MCF 10A (cell line): ENCODE measurements at regions of chr4 and their contacts with region 1.

Region 1: DNA sequence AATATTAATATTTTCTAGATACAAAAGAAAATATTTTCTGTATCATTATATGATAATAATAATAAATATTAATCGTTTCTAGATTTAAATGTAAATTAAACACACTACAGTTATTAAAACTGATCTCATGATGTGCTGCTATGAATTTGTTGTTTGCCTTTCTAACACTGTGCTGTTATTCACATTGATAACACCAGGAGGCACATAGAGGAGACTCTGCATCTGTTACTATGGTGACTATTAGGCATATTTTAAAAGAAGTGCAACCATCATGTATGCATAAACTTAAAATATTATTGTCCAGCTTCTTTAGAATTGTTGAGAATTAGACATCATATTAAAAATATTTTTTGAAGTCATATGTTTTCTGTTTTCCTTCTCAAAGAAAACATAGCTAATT is 11.8 kb upstream of the PDGFC start:
- DNase-seq: peak; percentile 48
- H3K4me3 Mint-ChIP-seq: no peak overlapping the region
- H3K27ac Mint-ChIP-seq: no peak overlapping the region
- H3K4me1 Mint-ChIP-seq: no peaks in the 10 kb centered on the region
- H3K27me3 Mint-ChIP-seq: no peaks in the 10 kb centered on the region
- CTCF ChIP-seq: peak; percentile 43

Region 2: DNA sequence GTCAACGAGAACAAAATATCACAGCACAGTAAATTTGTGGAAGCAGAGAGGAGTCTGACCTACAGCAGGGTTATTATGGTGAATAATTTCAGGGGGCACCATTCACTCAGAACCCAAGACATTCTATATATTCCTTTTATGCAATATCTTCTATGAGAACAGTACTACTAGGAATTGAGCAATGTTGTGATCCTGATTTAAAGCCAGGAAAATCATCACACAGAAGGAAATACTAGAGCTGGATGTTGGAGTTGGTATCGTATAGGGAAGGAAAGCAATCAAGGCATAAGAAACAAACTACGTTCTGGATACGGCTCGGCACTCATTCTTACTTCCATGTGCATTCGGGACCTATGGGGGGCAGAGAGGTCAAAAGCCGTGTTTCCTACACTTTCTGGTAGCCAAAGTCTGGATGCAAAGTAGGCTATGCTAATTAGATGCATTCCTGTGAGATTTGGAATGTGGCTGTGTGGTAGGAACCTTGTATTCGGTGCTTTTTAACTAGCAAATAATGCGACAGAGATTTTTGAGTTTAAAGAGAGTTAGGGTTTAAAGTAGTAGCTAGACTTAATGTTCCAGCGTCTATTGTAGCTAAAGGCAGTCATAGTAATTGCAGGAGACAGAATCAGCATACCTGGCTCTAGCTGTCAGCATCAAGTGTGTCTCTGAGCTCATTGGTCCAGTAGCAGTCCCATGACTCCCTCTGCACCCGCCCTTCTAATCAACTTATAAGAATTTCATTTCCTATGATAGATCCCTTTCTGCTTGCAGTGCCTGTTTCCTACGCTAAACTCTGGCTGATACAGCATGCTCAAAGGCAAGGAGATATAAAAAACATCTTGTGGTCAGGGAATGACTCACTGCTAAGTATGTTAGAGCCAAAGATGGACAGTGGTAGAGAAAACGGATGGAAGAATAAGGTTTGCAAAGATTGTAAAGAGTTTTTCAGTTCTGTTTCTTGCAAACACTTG is 31.5 kb after region 1 on chr4:
- CTCF ChIA-PET with region 1: interaction called, 4 read pairs
- POLR2A ChIA-PET with region 1: interaction called, 6 read pairs
- intact Hi-C with region 1: loop called (anchors 2 kb)
- DNase-seq: peak; percentile 79
- H3K4me3 Mint-ChIP-seq: peak overlapping the region; percentile 35
- H3K27ac Mint-ChIP-seq: peak overlapping the region; percentile 20
- H3K4me1 Mint-ChIP-seq: peaks cover 32% of the 10 kb centered on the region
- H3K27me3 Mint-ChIP-seq: no peaks in the 10 kb centered on the region
- CTCF ChIP-seq: no peak

Region 3: GRCh38 chr4:157115613-157116335 is 132.4 kb after region 1 on chr4:
- CTCF ChIA-PET with region 1: no interaction called
- POLR2A ChIA-PET with region 1: no interaction called
- intact Hi-C with region 1: no loop called
- DNase-seq: peak; percentile 58
- H3K4me3 Mint-ChIP-seq: no peak overlapping the region
- H3K27ac Mint-ChIP-seq: peak overlapping the region; percentile 60
- H3K4me1 Mint-ChIP-seq: peaks cover 15% of the 10 kb centered on the region
- H3K27me3 Mint-ChIP-seq: no peaks in the 10 kb centered on the region
- CTCF ChIP-seq: no peak

Region 4: GRCh38 chr4:157643257-157643656 is 659.9 kb after region 1 on chr4:
- CTCF ChIA-PET with region 1: no interaction called
- POLR2A ChIA-PET with region 1: no interaction called
- intact Hi-C with region 1: loop called (anchors 10 kb)
- DNase-seq: no peak
- H3K4me3 Mint-ChIP-seq: no peak overlapping the region
- H3K27ac Mint-ChIP-seq: no peak overlapping the region
- H3K4me1 Mint-ChIP-seq: no peaks in the 10 kb centered on the region
- H3K27me3 Mint-ChIP-seq: no peaks in the 10 kb centered on the region
- CTCF ChIP-seq: no peak